Right cardiac atrium (tissue), 5 donors: ENCODE measurements at regions of chr9 and their contacts with region 1.

Region 1: GRCh38 chr9:75855509-75855908 is 35.0 kb upstream of the PCSK5 start:
- DNase-seq: no peak
- ATAC-seq: no peak
- H3K4me3 ChIP-seq: no peak overlapping the region
- H3K27ac ChIP-seq: no peak overlapping the region
- H3K4me1 ChIP-seq: no peaks in the 10 kb centered on the region
- H3K27me3 ChIP-seq: no peaks in the 10 kb centered on the region

Region 2: GRCh38 chr9:75265525-75265972 is 590.0 kb before region 1 on chr9:
- intact Hi-C with region 1: loop called in 2 of 4 experiments (anchors 5 to 10 kb)
- DNase-seq: peak in 1 of 3 donors; percentile 17
- ATAC-seq: peak; percentile 64 to 74
- H3K4me3 ChIP-seq: no peak overlapping the region
- H3K27ac ChIP-seq: no peak overlapping the region
- H3K4me1 ChIP-seq: no peaks in the 10 kb centered on the region
- H3K27me3 ChIP-seq: no peaks in the 10 kb centered on the region

Region 3: DNA sequence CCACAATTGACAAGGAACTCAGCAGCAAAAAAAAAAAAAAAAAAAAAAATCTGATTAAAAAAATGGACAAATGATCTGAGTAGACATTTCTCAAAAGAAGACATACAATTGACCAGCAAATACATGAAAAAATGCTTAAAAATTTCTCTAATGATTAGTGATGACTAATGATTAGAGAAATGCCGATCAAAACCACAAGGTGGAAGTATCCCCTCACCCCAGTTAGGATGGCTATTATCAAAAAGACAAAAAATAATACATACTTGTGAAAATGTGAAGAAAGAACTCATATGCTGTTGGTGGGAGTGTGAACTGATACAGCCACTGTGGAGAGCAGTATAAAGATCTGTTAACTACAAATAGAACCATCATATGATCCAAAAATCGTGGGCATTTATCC is 521.9 kb before region 1 on chr9:
- intact Hi-C with region 1: loop called in 2 of 4 experiments (anchors 5 to 10 kb)
- DNase-seq: no peak
- ATAC-seq: no peak
- H3K4me3 ChIP-seq: no peak overlapping the region
- H3K27ac ChIP-seq: no peak overlapping the region
- H3K4me1 ChIP-seq: no peaks in the 10 kb centered on the region
- H3K27me3 ChIP-seq: no peaks in the 10 kb centered on the region

Region 4: DNA sequence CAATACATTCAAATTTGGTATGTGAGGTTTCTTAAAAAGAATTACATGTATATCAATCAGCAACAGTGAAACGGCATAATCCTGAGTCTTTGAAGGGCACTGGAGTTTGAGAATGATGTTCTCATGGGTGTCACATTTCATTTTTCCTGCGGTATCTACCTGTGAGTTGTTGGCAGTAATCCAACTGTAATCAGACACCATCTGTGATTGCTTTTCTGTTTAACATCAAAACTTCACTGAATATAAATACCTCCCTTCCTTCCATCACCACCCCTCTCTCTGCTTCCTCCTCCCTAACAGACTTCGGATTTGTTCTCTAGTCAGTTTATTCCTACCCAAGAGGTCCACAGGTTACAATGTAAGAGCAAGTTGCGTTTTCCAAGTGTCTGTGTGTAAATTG is 240.2 kb before region 1 on chr9:
- intact Hi-C with region 1: loop called in 1 of 4 experiments (anchors 10 kb)
- DNase-seq: no peak
- ATAC-seq: no peak
- H3K4me3 ChIP-seq: no peak overlapping the region
- H3K27ac ChIP-seq: no peak overlapping the region
- H3K4me1 ChIP-seq: peaks cover 2% of the 10 kb centered on the region
- H3K27me3 ChIP-seq: no peaks in the 10 kb centered on the region